ENCODE measurements at regions of chr2 and their contacts with region 1.

Region 1: DNA sequence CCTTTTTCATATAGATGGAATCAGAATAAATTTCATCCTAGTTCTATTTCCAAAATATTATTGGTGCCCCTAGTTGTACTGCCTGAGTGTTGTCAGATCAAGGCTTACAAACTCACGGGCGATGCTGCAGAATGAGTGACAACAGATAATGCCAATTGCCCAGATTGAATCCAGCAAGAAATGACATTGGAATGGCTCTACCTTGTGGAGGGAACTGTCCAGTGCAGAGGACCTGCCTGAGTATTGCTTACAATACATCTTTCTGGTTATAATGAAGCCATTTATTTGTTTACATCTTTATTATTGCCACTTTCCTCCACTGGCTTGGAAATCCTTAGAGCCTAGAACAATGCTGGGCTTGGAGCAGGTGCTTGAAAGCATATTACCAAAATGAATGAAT is 7.8 kb upstream of the IL1R2 start:
- DNase-seq: peak in 1 of 2 experiments; percentile 34
- H3K4me3 ChIP-seq: no peak overlapping the region
- H3K4me3 Mint-ChIP-seq: no peak overlapping the region
- H3K27ac Mint-ChIP-seq: no peak overlapping the region
- H3K4me1 ChIP-seq: peaks cover 53% of the 10 kb centered on the region
- H3K4me1 Mint-ChIP-seq: peaks cover 35% of the 10 kb centered on the region
- H3K27me3 ChIP-seq: no peaks in the 10 kb centered on the region
- H3K27me3 Mint-ChIP-seq: no peaks in the 10 kb centered on the region
- CTCF ChIP-seq: peak; percentile 18 to 39

Region 2: GRCh38 chr2:101883863-101884262 is 100.1 kb before region 1 on chr2:
- CTCF ChIA-PET with region 1: interaction called, 5 read pairs
- POLR2A ChIA-PET with region 1: no interaction called
- intact Hi-C with region 1: loop called (anchors 1 kb)
- DNase-seq: peak in 1 of 2 experiments; percentile 62
- H3K4me3 ChIP-seq: no peak overlapping the region
- H3K4me3 Mint-ChIP-seq: no peak overlapping the region
- H3K27ac Mint-ChIP-seq: no peak overlapping the region
- H3K4me1 ChIP-seq: no peaks in the 10 kb centered on the region
- H3K4me1 Mint-ChIP-seq: peaks cover 7% of the 10 kb centered on the region
- H3K27me3 ChIP-seq: no peaks in the 10 kb centered on the region
- H3K27me3 Mint-ChIP-seq: no peaks in the 10 kb centered on the region
- CTCF ChIP-seq: peak; percentile 63 to 73

Region 3: DNA sequence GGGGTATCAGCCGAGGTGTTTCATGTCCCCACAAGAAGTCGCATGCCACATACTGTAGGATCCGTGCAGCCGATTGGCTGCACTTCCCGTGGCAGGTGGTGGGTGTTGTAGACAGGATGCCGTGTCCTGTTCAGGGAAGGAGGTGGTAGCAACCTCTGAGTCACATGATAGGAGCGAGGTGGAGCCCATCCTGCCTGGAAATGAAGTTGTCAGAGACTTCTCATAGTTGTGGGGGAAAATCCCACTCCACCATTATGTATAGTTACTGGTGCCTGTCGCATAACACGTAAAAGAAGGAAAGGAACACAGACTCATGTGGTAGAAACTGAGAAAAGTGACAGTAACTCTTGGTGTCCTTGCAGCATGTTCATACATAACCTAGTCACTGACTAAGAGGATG is 83.6 kb before region 1 on chr2:
- CTCF ChIA-PET with region 1: no interaction called
- POLR2A ChIA-PET with region 1: no interaction called
- intact Hi-C with region 1: loop called (anchors 5 kb)
- DNase-seq: no peak
- H3K4me3 ChIP-seq: no peak overlapping the region
- H3K4me3 Mint-ChIP-seq: no peak overlapping the region
- H3K27ac Mint-ChIP-seq: no peak overlapping the region
- H3K4me1 ChIP-seq: no peaks in the 10 kb centered on the region
- H3K4me1 Mint-ChIP-seq: no peaks in the 10 kb centered on the region
- H3K27me3 ChIP-seq: no peaks in the 10 kb centered on the region
- H3K27me3 Mint-ChIP-seq: no peaks in the 10 kb centered on the region
- CTCF ChIP-seq: no peak

Region 4: DNA sequence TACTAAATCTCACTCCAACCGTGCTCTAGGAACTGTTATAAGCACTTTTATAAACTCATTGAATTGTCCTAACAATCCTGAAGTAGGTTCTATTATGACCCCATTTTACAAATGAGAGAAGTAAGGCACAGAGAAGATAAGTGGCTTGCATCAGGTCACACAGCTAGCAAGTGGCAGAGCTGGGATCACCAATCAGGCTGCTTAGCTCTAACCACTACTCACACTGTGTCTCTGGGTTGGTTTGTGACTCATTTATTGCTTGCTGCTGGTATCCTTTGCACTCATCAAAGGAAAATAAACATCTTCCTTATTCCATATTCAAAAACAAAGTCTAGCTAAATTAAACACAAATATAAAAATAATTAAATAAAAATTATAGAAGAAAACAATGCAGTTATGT is 34.6 kb before region 1 on chr2:
- CTCF ChIA-PET with region 1: no interaction called
- POLR2A ChIA-PET with region 1: no interaction called
- intact Hi-C with region 1: no loop called
- DNase-seq: no peak
- H3K4me3 ChIP-seq: no peak overlapping the region
- H3K4me3 Mint-ChIP-seq: no peak overlapping the region
- H3K27ac Mint-ChIP-seq: no peak overlapping the region
- H3K4me1 ChIP-seq: no peaks in the 10 kb centered on the region
- H3K4me1 Mint-ChIP-seq: no peaks in the 10 kb centered on the region
- H3K27me3 ChIP-seq: no peaks in the 10 kb centered on the region
- H3K27me3 Mint-ChIP-seq: no peaks in the 10 kb centered on the region
- CTCF ChIP-seq: no peak

Region 5: DNA sequence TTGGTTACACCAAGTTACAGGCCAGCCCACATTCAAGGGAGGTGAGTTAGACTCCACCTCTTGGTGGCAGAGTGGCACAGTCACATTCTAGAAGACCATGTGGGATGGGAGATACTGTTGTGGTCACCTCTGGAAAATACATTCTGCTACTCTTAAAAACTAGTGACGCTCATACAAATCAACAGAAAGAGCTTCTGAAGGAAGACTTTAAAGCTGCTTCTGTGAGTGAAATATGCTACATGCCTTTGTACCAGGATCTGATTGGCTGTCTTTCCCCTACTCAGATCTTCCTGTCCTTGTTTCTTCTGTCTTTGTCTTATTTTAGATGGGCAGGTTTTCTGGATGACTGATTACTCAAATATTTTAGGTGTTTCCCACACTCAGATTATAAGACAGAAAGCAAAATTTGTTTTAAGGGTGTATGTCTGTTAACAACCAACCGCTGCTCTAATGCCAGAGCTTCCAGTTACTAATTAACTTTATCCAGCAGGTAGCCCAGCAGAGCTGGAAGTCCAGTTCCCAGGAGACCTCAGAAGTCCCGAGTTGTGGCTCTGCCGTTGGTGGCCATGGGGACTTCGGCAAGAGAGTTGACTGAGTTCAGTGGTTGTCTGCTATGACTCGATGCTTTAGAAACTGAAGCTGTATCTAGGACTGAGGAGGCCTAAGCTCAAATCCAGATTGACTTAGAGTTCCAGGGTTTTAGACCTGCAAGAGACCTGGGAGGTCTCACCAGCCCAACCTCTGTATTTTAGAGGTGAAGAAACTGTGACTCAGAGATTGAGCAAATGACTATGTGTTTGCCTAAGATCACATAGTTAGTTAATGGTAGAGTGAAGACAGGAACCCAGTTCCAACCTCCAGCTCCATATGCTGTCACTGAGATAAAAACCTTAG is 15.2 kb after region 1 on chr2:
- CTCF ChIA-PET with region 1: interaction called, 4 read pairs
- POLR2A ChIA-PET with region 1: no interaction called
- intact Hi-C with region 1: loop called (anchors 1 kb)
- DNase-seq: peak; percentile 77 to 82
- H3K4me3 ChIP-seq: peak overlapping the region; percentile 21
- H3K4me3 Mint-ChIP-seq: peak overlapping the region; percentile 61
- H3K27ac Mint-ChIP-seq: peak overlapping the region; percentile 58
- H3K4me1 ChIP-seq: peaks cover 49% of the 10 kb centered on the region
- H3K4me1 Mint-ChIP-seq: peaks cover 7% of the 10 kb centered on the region
- H3K27me3 ChIP-seq: no peaks in the 10 kb centered on the region
- H3K27me3 Mint-ChIP-seq: no peaks in the 10 kb centered on the region
- CTCF ChIP-seq: peak in 1 of 2 experiments; percentile 24

Measured in Caco-2 (cell line).